ENCODE measurements at regions of chr15 and their contacts with region 1.

Region 1: DNA sequence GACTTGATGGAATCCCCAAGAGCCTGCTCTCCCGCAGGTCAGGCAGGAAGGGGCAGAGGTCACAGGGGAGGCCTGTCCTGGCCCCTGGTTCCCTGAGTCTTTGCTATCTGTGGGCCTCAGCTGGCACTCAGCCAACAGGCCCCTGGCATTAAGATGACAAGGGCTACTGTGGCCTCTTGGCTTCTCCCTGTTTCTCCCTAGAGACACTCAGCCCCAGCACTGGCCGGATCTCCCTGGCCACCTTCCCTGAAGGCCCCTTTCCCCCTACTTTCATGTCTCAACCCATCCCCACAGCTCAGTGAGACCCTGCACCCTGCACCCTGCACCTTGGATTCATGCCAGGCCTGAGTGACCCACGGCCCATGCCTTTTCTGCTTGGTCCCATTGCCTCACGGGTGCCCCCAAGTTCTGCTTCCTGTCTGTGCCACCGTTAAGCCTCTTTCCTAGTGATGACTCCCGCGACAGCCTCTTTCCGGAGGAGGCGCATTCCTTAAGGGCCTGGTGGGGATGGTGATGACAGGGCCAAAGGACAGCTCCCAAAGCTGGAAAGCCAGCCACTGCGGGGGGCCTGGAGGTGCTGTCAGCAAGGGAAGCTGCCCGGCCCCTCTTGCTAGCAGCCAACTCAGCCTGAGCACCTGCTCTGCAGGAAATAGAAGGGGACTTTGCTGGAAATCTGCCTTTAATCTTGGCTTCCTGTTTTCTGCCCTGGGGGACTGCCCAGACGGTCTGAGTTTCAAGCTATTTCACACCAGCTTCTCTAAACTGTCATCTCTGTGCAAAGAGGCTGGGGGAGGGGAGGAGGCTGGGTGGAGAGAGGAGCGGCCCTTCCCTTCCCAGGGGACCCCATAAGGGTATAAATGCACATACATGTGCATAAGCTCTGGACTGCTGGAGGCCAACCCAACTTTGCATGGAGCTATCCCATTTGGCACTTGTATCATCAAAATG is 4.8 kb upstream of the CSK start:
- DNase-seq: no peak
- H3K4me3 ChIP-seq: no peak overlapping the region
- CTCF ChIP-seq: no peak

Region 2: GRCh38 chr15:74373731-74374647 is 403.1 kb before region 1 on chr15:
- in situ Hi-C with region 1: loop called (anchors 10 kb)
- DNase-seq: peak; percentile 53
- H3K4me3 ChIP-seq: peak overlapping the region; percentile 69
- CTCF ChIP-seq: peak; percentile 88

Region 3: GRCh38 chr15:74422650-74423430 is 354.3 kb before region 1 on chr15:
- in situ Hi-C with region 1: no loop called
- DNase-seq: no peak
- H3K4me3 ChIP-seq: no peak overlapping the region
- CTCF ChIP-seq: no peak

Region 4: DNA sequence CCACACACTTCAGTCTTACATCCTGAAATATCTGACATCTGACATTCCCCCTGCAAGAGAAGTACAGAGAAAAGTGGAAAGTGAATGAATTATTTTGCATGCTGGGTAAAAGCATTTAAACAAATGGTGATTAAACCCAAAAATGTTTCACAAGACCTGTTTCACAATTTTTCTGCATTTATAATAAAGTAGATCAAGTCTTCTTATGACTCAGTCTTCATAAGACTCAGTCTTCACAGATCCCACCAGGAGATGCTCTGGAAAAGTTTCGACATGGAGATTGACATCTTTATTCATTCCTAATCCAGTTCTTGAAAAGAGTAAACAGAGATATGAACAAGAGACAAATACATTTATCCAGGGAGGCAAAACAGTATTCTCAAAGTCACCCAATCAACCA is 68.1 kb before region 1 on chr15:
- in situ Hi-C with region 1: loop called (anchors 5 kb)
- DNase-seq: no peak
- H3K4me3 ChIP-seq: no peak overlapping the region
- CTCF ChIP-seq: no peak

Region 5: GRCh38 chr15:74724615-74725240 is 52.4 kb before region 1 on chr15:
- in situ Hi-C with region 1: no loop called
- DNase-seq: no peak
- H3K4me3 ChIP-seq: no peak overlapping the region
- CTCF ChIP-seq: no peak

Region 6: GRCh38 chr15:74735305-74735704 is 41.8 kb before region 1 on chr15:
- in situ Hi-C with region 1: loop called (anchors 5 kb)
- DNase-seq: no peak
- H3K4me3 ChIP-seq: no peak overlapping the region
- CTCF ChIP-seq: no peak

Region 7: GRCh38 chr15:74816808-74817674 is 39.9 kb after region 1 on chr15:
- in situ Hi-C with region 1: loop called (anchors 5 kb)
- DNase-seq: no peak
- H3K4me3 ChIP-seq: no peak overlapping the region
- CTCF ChIP-seq: peak; percentile 29

Region 8: DNA sequence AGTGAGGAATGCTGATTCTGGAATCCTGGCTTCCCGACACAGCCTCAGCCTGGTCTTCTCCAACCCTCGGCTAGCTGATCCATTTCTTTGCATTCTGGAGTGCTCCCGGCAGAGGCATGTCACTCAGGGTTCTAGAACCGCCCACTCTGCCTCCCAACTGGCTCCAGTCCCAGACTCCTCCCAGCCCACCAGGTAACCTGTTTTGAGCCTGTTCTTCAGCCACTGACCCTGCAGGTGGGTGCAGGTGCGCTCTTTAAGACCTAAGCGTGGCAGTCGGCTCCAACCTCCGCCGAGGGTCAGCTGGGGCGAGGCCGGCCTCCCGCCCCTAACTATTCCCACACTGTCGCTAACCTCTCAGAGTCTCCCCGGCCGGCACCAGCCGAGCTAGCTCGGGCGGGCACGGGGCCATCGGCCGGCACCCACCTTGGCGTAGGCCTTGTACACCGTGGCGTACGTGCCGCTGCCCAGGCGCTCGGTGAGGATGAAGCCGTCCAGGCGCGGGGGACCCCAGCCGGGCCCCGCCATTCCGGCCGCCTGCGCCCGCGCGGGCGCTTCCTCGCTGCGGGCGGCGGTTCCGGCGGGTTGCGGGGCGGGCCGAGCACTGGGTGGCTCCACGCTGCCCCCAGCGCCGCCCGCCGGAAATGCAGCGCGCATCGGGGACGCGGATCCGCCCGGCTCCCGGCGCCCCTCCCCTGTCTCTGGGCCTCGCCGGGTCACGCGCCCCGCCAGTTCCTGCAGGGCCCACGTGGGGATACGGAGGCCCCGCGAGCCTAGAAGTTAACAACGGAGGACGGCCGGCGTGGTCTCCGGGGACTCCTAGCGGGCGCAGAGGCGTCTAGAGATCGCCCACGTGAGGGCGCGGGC is 65.7 kb after region 1 on chr15 and contains the start of gene ULK3:
- in situ Hi-C with region 1: no loop called
- DNase-seq: peak; percentile 36
- H3K4me3 ChIP-seq: peak within 1 kb of the TSS; percentile 87
- CTCF ChIP-seq: peak; percentile 40